ENCODE measurements at regions of chr17 and their contacts with region 1.

Region 1: DNA sequence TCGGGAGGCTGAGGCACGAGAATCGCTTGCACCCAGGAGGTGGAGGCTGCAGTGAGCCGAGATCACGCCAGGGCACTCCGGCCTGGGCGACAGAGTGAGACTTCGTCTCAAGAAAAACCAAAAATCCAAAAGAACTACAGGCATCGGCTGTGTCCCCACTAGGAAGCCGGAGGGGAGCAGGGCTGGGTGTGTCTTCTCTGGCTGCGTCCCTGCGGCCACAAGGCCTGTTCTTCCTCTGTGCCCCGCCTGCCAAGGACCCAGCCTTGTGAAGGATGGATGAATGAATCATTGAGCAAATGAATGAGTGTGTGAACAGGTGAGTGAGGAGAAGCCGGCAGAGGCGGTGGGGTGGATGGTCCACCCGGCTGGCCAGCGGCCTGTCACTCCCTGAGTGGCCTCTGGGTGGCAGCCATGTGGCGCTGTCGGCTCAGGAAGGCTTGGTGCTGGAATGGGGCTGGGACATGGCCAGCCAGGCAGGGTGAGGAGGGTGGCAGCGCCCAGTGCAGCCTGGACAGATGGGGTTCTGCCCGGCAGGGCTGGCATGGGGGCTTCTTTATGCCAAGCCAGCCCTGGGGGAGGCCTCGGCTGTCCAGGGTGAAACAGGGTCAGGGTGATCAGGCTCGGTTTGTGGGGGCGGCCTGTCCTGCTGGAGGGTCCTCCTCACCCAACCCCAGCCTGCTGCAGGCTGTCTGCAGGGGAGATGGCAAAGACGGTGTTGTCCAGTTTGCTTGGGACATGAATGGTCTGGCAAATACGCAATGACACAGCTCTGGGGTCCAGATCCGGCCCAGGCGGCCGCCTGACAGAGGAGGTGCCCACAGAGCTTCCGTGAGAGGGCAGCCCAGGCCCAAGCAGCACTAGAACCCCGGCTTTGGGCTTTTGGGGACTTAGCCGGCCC is 21.7 kb downstream of the SLC25A10 start:
- DNase-seq: peak; percentile 100
- H3K4me3 ChIP-seq: no peak overlapping the region; a peak in 1 of 4 replicates
- H3K27ac ChIP-seq: no peak overlapping the region
- H3K4me1 ChIP-seq: peaks cover 0 to 5% of the 10 kb centered on the region in 2 experiments; a peak in 1 of 4 replicates
- H3K27me3 ChIP-seq: no peaks in the 10 kb centered on the region; the same call in 1 of the 2 replicates
- CTCF ChIP-seq: peak; percentile 96
- EP300 ChIP-seq: no peak
- RAD21 ChIP-seq: peak; percentile 100

Region 2: DNA sequence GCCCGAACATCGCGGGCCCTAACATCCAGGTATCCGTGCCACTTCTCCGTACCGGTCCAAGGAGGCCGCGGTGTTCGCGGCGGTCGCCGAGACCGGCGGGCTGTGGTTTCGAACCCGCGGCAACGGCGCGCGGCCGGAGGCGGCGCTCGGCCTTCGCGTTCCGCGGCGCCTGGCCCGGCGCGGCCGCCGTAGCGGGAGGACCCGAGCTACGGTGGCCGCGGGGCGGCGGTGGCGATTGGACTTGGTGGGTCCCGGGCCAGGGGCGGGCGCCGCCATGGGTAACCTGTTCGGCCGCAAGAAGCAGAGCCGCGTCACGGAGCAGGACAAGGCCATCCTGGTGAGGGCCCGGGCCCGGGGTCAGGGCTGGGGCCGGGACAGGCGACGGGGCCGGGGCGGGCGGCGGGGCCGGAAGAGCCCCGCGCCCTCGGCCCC is 742.1 kb before region 1 on chr17 and contains the start of gene CHMP6:
- CTCF ChIA-PET with region 1: no interaction called
- POLR2A ChIA-PET with region 1: no interaction called
- DNase-seq: peak; percentile 99
- H3K4me3 ChIP-seq: peak within 1 kb of the TSS; percentile 79 to 89
- H3K27ac ChIP-seq: no peak within 1 kb of the TSS; a peak in 1 of 4 replicates
- H3K4me1 ChIP-seq: peaks cover 10 to 17% of the 10 kb centered on the region in 2 experiments; a peak in 1 of 4 replicates
- H3K27me3 ChIP-seq: no peaks in the 10 kb centered on the region
- CTCF ChIP-seq: peak; percentile 32
- EP300 ChIP-seq: no peak; a peak in 1 of 4 replicates
- RAD21 ChIP-seq: no peak
- polyA plus RNA-seq, gene CHMP6: 44.1 and 44.3 TPM in 2 replicates

Region 3: DNA sequence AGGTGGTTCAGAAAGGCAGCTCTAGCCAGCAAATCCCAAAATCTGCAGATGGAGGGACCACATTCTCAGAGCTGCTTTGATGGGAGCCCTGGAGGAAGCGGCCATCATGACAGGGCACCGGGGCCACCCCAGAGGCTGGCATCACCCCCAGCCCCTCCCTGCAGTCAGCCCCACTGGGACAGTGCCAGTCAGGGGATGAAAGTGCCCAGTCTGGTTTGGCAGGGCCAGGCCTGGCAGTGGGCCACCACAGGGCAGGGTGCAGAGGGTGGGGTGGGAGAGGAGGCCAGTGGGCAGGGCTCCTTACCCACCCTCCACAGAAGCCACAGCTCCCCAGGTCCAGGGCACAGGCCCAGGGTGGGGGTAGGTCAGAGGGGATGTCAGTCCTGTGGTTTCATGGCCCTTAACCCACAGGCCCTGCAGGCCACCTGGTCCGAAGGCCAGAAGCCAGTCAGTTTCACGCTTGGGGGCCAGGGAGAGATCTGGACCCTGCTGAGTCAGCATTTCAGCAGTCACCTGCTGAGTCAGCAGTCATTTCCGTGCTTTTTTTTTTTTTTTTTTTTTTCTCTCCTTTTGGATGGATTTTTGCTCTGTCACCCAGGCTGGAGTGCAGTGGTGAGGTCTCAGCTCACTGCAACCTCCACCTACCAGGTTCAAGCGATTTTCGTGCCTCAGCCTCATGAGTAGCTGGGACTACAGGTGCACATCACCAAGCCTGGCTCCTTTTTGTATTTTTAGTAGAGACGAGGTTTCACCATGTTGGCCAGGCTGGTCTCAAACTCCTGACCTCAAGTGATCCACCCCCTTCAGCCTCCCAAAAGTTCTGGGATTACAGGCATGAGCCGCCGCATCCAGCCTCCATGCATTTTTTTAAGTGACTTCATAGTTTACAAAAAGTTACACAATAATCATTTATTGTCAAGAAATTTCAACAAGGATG is 11.3 kb before region 1 on chr17:
- CTCF ChIA-PET with region 1: interaction called, 41 read pairs
- POLR2A ChIA-PET with region 1: no interaction called
- DNase-seq: peak; percentile 64
- H3K4me3 ChIP-seq: no peak overlapping the region
- H3K27ac ChIP-seq: no peak overlapping the region
- H3K4me1 ChIP-seq: peaks cover 0 to 3% of the 10 kb centered on the region in 2 experiments; a peak in 1 of 4 replicates
- H3K27me3 ChIP-seq: no peaks in the 10 kb centered on the region
- CTCF ChIP-seq: no peak
- EP300 ChIP-seq: no peak
- RAD21 ChIP-seq: no peak

Region 4: DNA sequence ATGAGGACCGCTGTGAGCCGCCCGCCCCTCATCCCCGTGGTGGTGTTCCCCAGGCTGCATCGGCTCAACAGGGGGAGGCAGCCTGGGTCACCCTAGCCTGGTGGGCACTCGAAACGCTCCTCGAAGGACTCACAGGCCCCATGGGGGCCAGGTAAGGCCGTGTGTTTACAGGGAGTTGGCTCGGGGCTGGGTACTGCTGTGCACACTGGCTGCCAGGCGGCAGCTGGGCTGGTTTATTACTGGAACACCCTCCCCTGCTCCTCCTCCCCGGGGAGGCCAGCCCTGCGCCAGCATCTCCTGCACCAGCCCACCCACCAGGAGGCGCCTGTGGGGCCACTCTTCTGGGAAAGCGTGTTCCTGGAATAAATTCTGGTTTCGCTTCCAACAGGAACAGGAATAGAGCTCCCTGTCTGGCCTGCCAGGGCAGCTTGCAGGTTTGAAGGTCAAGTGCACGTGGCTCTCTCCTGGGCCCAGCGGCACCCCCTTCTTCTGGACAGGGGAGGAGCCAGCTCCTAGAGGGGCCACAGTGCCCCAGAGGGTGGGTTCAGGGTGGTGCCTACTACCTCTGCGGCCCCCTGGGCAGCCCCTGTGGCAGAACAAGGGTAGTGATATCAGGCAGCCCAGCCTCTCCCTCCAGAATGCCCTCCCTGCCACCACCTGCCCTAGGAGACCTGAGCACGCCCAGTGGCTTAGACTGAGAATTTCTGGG is 88.0 kb after region 1 on chr17:
- CTCF ChIA-PET with region 1: interaction called, 11 read pairs
- POLR2A ChIA-PET with region 1: no interaction called
- DNase-seq: peak; percentile 82
- H3K4me3 ChIP-seq: no peak overlapping the region
- H3K27ac ChIP-seq: peak overlapping the region in 1 of 2 experiments; percentile 23; a peak in 1 of 4 replicates
- H3K4me1 ChIP-seq: peaks cover 0 to 11% of the 10 kb centered on the region in 2 experiments; a peak in 1 of 4 replicates
- H3K27me3 ChIP-seq: no peaks in the 10 kb centered on the region; the same call in 1 of the 2 replicates
- CTCF ChIP-seq: peak; percentile 55
- EP300 ChIP-seq: no peak
- RAD21 ChIP-seq: peak; percentile 46